CD8-positive, alpha-beta T cell (primary cell): ENCODE measurements at regions of chr17 and their contacts with region 1.

Region 1: GRCh38 chr17:75991401-75991800 is 9.3 kb upstream of the CDK3 start:
- DNase-seq: no peak
- ATAC-seq: no peak
- H3K4me3 ChIP-seq: no peak overlapping the region
- H3K4me3 Mint-ChIP-seq: no peak overlapping the region
- H3K27ac ChIP-seq: no peak overlapping the region
- H3K27ac Mint-ChIP-seq: no peak overlapping the region
- H3K4me1 ChIP-seq: no peaks in the 10 kb centered on the region
- H3K4me1 Mint-ChIP-seq: no peaks in the 10 kb centered on the region
- H3K27me3 ChIP-seq: no peaks in the 10 kb centered on the region
- H3K27me3 Mint-ChIP-seq: no peaks in the 10 kb centered on the region
- CTCF ChIP-seq: no peak

Region 2: DNA sequence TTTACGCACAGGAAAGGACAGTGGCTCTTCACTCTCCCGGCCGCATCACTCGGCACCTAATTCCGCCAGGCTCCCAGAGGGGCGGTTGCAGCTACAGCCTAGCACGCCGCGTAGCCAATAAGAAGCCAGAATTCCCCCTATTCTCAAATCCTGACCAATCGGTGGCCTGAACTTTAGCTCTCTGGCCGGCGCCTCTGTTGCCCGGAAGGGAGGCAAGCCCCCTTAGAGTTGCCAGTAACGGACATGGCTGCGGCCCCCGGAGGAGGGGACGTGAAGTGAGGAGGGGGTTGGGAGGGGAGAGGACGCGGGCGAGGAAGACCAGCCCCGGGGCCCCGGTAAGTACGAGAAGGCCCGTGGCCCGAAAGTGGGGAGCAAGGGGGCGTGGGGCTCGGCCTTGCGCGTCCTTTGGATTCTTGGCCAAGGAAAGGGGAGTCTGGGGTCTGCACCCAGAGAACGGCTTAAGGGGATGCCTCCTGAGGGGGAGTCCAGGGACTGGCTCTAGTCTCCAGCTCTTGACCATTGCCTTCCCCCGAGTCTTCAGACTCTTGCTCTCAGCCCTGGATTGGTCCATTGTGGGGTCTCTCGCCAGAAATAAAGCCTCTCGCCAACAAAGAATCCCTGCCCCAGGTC is 534.9 kb before region 1 on chr17 and contains the start of gene TMEM94:
- CTCF ChIA-PET with region 1: no interaction called
- POLR2A ChIA-PET with region 1: no interaction called
- intact Hi-C with region 1: no loop called
- DNase-seq: peak; percentile 80 to 98 (median 91)
- ATAC-seq: peak; percentile 97
- H3K4me3 ChIP-seq: peak within 1 kb of the TSS; percentile 100
- H3K4me3 Mint-ChIP-seq: peak within 1 kb of the TSS; percentile 96
- H3K27ac ChIP-seq: peak within 1 kb of the TSS; percentile 75 to 82
- H3K27ac Mint-ChIP-seq: peak within 1 kb of the TSS; percentile 92
- H3K4me1 ChIP-seq: peaks cover 16% of the 10 kb centered on the region
- H3K4me1 Mint-ChIP-seq: peaks cover 36% of the 10 kb centered on the region
- H3K27me3 ChIP-seq: no peaks in the 10 kb centered on the region
- H3K27me3 Mint-ChIP-seq: peaks cover 3% of the 10 kb centered on the region
- CTCF ChIP-seq: no peak
- total RNA-seq, gene TMEM94: 44.8 to 46.5 TPM

Region 3: DNA sequence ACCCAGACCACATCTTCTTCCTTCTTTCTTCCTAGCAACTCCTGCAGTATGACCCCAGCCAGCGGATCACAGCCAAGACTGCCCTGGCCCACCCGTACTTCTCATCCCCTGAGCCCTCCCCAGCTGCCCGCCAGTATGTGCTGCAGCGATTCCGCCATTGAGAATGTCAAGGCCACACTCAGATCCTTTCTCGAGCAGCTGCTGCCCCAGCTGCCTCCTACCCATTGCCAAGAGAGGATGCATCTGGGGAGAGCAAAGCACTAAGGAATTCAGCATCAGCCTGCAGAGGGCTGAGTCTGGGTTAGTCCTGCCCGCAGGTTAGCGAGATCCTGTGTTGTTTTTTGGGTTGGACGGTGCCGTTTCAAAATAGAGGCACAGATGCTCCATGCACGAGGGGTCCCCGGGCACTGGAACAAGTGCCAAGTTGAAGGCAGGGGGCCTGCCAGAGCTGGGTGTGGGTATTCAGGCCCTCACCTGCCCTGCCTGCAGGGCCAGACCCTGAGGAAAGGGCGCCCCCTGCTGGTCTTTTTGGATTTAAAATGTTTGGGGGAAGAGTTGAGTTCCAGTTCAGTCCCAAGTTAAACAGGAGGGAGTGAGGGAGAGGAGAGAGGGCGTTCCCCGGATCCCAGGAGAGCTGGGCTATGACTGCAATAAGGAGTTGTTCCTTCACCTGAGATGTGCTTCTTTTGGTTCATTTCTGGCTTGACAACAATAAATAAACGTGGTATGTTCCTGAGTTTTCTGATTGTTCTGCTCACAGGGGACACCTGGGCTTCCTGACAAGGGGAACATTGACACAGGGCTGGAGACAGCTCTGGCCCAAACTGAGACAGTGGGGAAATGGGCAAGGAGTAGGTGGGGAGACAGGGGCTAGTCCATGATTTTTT is 14.1 kb after region 1 on chr17:
- CTCF ChIA-PET with region 1: interaction called, 44 read pairs
- POLR2A ChIA-PET with region 1: no interaction called
- intact Hi-C with region 1: no loop called
- DNase-seq: peak; percentile 53 to 90 (median 76)
- ATAC-seq: peak; percentile 63
- H3K4me3 ChIP-seq: no peak overlapping the region
- H3K4me3 Mint-ChIP-seq: no peak overlapping the region
- H3K27ac ChIP-seq: no peak overlapping the region
- H3K27ac Mint-ChIP-seq: no peak overlapping the region
- H3K4me1 ChIP-seq: no peaks in the 10 kb centered on the region
- H3K4me1 Mint-ChIP-seq: no peaks in the 10 kb centered on the region
- H3K27me3 ChIP-seq: no peaks in the 10 kb centered on the region
- H3K27me3 Mint-ChIP-seq: no peaks in the 10 kb centered on the region
- CTCF ChIP-seq: no peak

Region 4: GRCh38 chr17:76446449-76447231 is 455.2 kb after region 1 on chr17:
- CTCF ChIA-PET with region 1: no interaction called
- POLR2A ChIA-PET with region 1: no interaction called
- intact Hi-C with region 1: no loop called
- DNase-seq: no peak
- ATAC-seq: no peak
- H3K4me3 ChIP-seq: no peak overlapping the region
- H3K4me3 Mint-ChIP-seq: no peak overlapping the region
- H3K27ac ChIP-seq: no peak overlapping the region
- H3K27ac Mint-ChIP-seq: no peak overlapping the region
- H3K4me1 ChIP-seq: peaks cover 24% of the 10 kb centered on the region
- H3K4me1 Mint-ChIP-seq: peaks cover 71% of the 10 kb centered on the region
- H3K27me3 ChIP-seq: no peaks in the 10 kb centered on the region
- H3K27me3 Mint-ChIP-seq: no peaks in the 10 kb centered on the region
- CTCF ChIP-seq: no peak